ENCODE measurements at regions of chr13 and their contacts with region 1.

Region 1: DNA sequence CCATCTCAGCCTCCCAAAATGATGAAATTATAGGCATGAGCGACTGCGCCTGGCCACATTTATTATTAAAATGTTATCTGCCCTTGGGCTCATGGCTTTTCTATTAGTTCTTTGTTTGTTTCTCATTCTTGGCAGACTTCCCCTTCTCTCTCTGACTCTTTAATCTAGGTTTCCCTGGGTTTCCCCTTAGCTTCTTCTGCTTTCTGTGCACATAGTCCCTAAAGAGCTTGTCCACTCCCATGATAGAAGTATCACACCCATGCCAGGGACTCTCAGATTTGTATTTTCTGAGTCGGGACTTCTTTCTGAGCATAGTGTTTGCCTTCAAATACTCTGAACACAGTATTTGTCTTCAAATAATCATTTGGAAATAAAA is 38.6 kb upstream of the ITM2B start:
- DNase-seq: peak; percentile 80
- ATAC-seq: peak; percentile 95
- H3K4me3 ChIP-seq: no peak overlapping the region
- H3K4me3 Mint-ChIP-seq: peak overlapping the region; percentile 11
- H3K27ac ChIP-seq: peak overlapping the region; percentile 49 to 70
- H3K27ac Mint-ChIP-seq: peak overlapping the region; percentile 10
- H3K4me1 ChIP-seq: peaks cover 20 to 28% of the 10 kb centered on the region in 2 donors
- H3K4me1 Mint-ChIP-seq: peaks cover 12% of the 10 kb centered on the region
- H3K27me3 ChIP-seq: no peaks in the 10 kb centered on the region
- H3K27me3 Mint-ChIP-seq: no peaks in the 10 kb centered on the region
- CTCF ChIP-seq: no peak

Region 2: DNA sequence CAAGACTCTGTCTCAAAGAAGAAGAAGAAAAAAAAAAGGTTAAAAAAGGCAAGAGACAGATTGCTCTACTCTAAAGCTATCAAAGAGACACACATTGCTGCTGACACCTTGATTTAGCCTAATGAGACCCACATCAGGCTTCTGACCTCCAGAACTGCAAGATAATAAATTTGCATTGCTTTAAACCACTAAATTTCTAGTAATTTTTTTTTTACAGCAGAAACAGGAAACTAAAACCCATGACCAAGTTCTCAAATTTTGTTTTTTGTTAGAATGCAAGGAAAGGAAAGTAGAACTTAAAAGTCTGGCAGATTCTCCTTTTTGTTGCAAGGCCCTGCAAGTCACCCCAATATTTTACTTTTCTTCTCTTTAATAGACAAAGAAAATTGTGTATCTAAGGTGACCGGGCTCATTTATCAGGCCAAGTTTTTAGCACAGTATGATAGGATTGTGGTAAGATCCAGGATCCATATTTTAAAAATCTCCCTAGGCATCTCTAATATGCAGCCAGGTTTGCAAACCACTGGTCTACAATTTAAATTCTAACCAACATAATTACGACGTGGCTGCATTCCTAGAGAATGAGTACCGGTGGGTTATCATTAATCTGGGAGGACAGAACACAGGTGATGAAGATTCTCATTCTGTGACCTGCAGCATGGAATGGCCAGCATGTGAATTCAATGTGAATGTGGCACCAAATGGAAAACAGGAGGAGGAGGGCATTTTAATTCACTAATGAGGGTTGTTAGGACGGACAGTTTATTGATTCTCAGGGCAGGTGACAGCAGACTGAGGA is 42.8 kb before region 1 on chr13:
- CTCF ChIA-PET with region 1: no interaction called
- POLR2A ChIA-PET with region 1: no interaction called
- intact Hi-C with region 1: loop called (anchors 5 kb)
- DNase-seq: peak; percentile 58
- ATAC-seq: peak; percentile 65
- H3K4me3 ChIP-seq: peak overlapping the region in 1 of 5 experiments; percentile 41
- H3K4me3 Mint-ChIP-seq: peak overlapping the region; percentile 65
- H3K27ac ChIP-seq: no peak overlapping the region
- H3K27ac Mint-ChIP-seq: peak overlapping the region; percentile 59
- H3K4me1 ChIP-seq: peaks cover 21 to 25% of the 10 kb centered on the region in 2 donors
- H3K4me1 Mint-ChIP-seq: peaks cover 33% of the 10 kb centered on the region
- H3K27me3 ChIP-seq: no peaks in the 10 kb centered on the region
- H3K27me3 Mint-ChIP-seq: no peaks in the 10 kb centered on the region
- CTCF ChIP-seq: no peak

Region 3: GRCh38 chr13:48184260-48184659 is 10.1 kb before region 1 on chr13:
- CTCF ChIA-PET with region 1: interaction called, 5 read pairs
- POLR2A ChIA-PET with region 1: no interaction called
- intact Hi-C with region 1: loop called (anchors 2 kb)
- DNase-seq: peak; percentile 23
- ATAC-seq: no peak
- H3K4me3 ChIP-seq: no peak overlapping the region
- H3K4me3 Mint-ChIP-seq: peak overlapping the region; percentile 43
- H3K27ac ChIP-seq: peak overlapping the region; percentile 46 to 70
- H3K27ac Mint-ChIP-seq: peak overlapping the region; percentile 62
- H3K4me1 ChIP-seq: peaks cover 59 to 68% of the 10 kb centered on the region in 2 donors
- H3K4me1 Mint-ChIP-seq: peaks cover 59% of the 10 kb centered on the region
- H3K27me3 ChIP-seq: no peaks in the 10 kb centered on the region
- H3K27me3 Mint-ChIP-seq: no peaks in the 10 kb centered on the region
- CTCF ChIP-seq: no peak